ENCODE measurements at regions of chr1 and their contacts with region 1.

Region 1: GRCh38 chr1:59699227-59699847 is 115.4 kb upstream of the HOOK1 start:
- DNase-seq: no peak
- H3K4me3 ChIP-seq: no peak overlapping the region
- H3K27ac ChIP-seq: no peak overlapping the region
- H3K4me1 ChIP-seq: peaks cover 0 to 23% (median 20%) of the 10 kb centered on the region in 4 donors
- H3K27me3 ChIP-seq: no peaks in the 10 kb centered on the region
- CTCF ChIP-seq: peak; percentile 91 to 92

Region 2: GRCh38 chr1:58739856-58740466 is 959.4 kb before region 1 on chr1:
- intact Hi-C with region 1: loop called (anchors 10 kb)
- DNase-seq: no peak
- H3K4me3 ChIP-seq: no peak overlapping the region
- H3K27ac ChIP-seq: no peak overlapping the region
- H3K4me1 ChIP-seq: no peaks in the 10 kb centered on the region
- H3K27me3 ChIP-seq: no peaks in the 10 kb centered on the region
- CTCF ChIP-seq: peak; percentile 76 to 89

Region 3: GRCh38 chr1:58783993-58784757 is 915.2 kb before region 1 on chr1 and contains the start of gene JUN:
- intact Hi-C with region 1: loop called (anchors 5 kb)
- DNase-seq: peak; percentile 100
- H3K4me3 ChIP-seq: peak within 1 kb of the TSS; percentile 83 to 88
- H3K27ac ChIP-seq: peak within 1 kb of the TSS; percentile 100
- H3K4me1 ChIP-seq: peaks cover 0 to 33% (median 19%) of the 10 kb centered on the region in 4 donors
- H3K27me3 ChIP-seq: no peaks in the 10 kb centered on the region
- CTCF ChIP-seq: no peak

Region 4: GRCh38 chr1:59309795-59310548 is 389.4 kb before region 1 on chr1:
- intact Hi-C with region 1: loop called (anchors 10 kb)
- DNase-seq: no peak
- H3K4me3 ChIP-seq: no peak overlapping the region
- H3K27ac ChIP-seq: no peak overlapping the region
- H3K4me1 ChIP-seq: no peaks in the 10 kb centered on the region
- H3K27me3 ChIP-seq: no peaks in the 10 kb centered on the region
- CTCF ChIP-seq: no peak

Region 5: DNA sequence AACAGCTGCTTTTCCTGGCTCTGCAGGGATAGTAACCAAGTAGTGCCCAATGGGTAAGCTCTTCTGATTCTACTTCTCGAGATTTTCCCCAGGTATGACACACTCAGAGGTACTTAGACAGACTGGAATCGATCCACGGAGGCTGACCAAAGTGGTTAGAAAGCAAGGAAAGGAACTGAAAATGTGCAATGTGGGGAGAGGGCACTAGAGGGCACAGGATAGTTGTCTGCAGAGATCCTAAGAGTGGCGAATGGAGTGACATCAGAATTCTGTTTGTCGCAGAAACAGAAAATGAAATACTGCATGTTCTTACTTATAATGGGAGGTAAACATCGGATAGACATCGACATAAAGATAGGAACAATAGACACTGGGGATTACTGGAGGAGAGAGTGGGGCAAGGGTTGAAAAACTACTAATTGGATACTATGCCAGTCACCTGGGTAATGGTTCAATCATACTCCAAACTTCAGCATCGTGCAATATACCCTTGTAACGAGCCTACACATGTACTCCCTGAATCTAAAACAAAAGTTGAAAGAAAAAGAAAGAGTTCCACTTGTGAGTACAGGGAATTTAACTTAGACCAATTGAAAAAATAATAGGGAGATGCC is 203.9 kb after region 1 on chr1:
- intact Hi-C with region 1: no loop called
- DNase-seq: no peak
- H3K4me3 ChIP-seq: no peak overlapping the region
- H3K27ac ChIP-seq: no peak overlapping the region
- H3K4me1 ChIP-seq: no peaks in the 10 kb centered on the region
- H3K27me3 ChIP-seq: peaks cover 0 to 6% of the 10 kb centered on the region in 2 donors
- CTCF ChIP-seq: peak; percentile 18 to 28

Measured in tibial artery (tissue), 4 donors.